ENCODE measurements at regions of chr1 and their contacts with region 1.

Region 1: DNA sequence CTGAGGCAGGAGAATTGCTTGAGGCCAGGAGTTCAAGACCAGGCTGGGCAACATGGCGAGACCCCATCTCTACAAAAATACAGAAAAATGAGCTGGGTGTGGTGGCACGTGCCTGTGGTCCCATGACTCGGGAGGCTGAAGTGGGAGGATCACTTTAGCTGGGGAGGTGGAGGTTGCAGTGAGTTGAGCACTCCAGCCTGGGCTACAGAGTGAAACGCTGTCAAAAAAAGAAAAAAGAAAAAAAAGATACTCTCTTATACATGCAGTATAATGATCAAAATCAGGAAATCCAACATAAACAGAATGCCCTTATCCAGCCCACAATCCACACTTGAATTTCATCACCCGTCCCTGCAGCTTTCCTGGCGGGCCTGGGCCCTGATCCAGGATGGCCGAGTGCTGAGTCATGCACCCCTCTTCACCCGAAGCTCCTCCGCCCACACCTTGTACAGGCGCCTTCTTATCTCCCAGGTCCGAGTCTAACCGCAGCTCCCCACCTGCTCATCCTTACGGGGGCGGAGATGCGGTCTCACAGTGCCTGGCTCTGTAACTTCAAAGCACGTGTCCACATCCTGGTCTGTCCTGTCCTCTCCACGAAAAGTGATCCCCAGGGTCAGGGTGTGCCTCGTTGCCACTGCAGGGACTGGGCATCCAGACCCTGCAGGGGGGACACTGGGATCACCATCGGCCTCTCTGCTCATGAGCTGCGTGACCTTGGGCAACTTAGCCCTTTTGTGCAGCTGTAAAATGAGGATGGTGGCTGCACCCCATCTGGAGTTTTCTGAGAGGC is 120.2 kb upstream of the SLC45A1 start:
- DNase-seq: peak; percentile 53 to 79 (median 63)
- ATAC-seq: peak; percentile 45
- H3K4me3 ChIP-seq: no peak overlapping the region
- H3K27ac ChIP-seq: peak overlapping the region in 1 of 4 donors; percentile 2
- H3K4me1 ChIP-seq: peaks cover 25% of the 10 kb centered on the region
- H3K27me3 ChIP-seq: no peaks in the 10 kb centered on the region
- CTCF ChIP-seq: no peak
- POLR2A ChIP-seq: no peak

Region 2: GRCh38 chr1:8031176-8031785 is 166.4 kb before region 1 on chr1:
- intact Hi-C with region 1: loop called (anchors 10 kb)
- DNase-seq: peak in 2 of 4 donors; percentile 44 to 45
- ATAC-seq: no peak
- H3K4me3 ChIP-seq: no peak overlapping the region
- H3K27ac ChIP-seq: peak overlapping the region in 2 of 4 donors; percentile 98 to 100
- H3K4me1 ChIP-seq: peaks cover 42% of the 10 kb centered on the region
- H3K27me3 ChIP-seq: no peaks in the 10 kb centered on the region
- CTCF ChIP-seq: peak; percentile 36 to 84 (median 76)
- POLR2A ChIP-seq: no peak

Region 3: DNA sequence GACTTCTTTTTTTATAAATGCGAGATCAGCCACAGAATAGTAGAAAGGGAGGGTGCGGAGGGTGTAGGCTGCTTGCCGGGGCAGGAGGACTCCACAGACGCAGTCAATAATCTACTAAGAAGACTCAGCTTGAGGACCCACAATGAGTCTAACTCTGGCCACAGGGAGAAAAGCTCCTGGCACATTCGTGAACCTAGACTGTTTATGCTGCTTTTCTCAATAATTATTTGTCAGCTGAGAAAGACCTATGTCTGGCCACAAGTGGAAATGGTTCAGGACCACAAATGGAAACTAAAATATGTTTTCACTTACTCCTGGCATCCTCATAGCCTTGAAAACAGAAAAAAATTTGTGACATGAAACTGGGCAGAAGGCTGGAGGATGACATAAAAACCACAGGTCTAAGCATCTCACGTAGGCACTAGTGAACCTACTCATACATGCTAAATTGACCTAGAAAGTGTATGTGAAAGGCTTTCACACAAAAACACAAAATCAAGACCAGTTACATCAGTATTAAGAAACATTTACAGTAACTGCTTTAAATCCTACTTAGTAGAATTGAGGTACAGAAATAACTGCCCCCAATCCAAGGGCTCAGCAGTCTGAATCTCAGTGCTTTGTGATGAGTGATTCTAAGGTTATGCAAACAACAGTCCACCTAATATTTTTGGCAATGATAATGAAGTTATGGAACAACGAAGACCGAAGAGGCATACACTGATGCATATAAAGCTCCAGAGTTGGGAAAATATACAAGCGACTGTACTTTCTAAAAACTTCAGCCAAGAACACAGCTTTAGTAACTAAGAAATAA is 279.7 kb after region 1 on chr1:
- intact Hi-C with region 1: no loop called
- DNase-seq: no peak
- ATAC-seq: no peak
- H3K4me3 ChIP-seq: no peak overlapping the region
- H3K27ac ChIP-seq: peak overlapping the region in 2 of 4 donors; percentile 12 to 25
- H3K4me1 ChIP-seq: peaks cover 6% of the 10 kb centered on the region
- H3K27me3 ChIP-seq: no peaks in the 10 kb centered on the region
- CTCF ChIP-seq: no peak
- POLR2A ChIP-seq: no peak

Region 4: GRCh38 chr1:8941906-8942305 is 744.2 kb after region 1 on chr1:
- intact Hi-C with region 1: no loop called
- DNase-seq: no peak
- ATAC-seq: peak; percentile 76
- H3K4me3 ChIP-seq: no peak overlapping the region
- H3K27ac ChIP-seq: peak overlapping the region in 2 of 4 donors; percentile 12 to 31
- H3K4me1 ChIP-seq: no peaks in the 10 kb centered on the region
- H3K27me3 ChIP-seq: no peaks in the 10 kb centered on the region
- CTCF ChIP-seq: no peak
- POLR2A ChIP-seq: no peak

Measured in body of pancreas (tissue), 4 donors.